Activated CD4-positive, alpha-beta memory T cell treated with anti-CD3 and anti-CD28 coated beads for 36 hours (primary cell): ENCODE measurements at regions of chr2 and their contacts with region 1.

Region 1: DNA sequence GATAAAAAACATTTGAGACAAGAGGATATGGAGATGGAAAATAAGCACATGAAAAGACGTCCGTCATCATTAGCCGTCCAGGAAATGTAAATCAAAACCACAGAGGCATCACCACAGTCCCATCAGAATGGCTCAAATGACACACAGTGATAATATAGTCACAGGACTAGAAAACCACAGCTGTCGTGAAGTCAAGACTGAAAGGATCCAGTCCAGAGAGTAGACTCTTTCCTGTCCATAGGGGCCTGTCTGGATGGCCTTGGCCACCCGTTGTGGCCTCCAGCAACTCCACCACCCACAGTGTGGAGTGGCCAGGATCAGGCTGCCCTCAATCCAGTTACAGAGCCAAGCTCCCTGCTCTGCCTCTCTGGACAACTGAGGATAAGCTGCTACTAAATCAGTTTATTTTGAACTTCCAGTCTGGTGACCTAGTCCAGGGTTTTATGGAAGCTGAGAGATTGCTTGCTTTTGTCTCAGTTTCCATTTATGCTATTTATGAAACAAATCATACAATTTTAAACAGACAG is 60.4 kb downstream of the RHOB start:
- DNase-seq: peak; percentile 61
- H3K4me3 Mint-ChIP-seq: no peak overlapping the region
- H3K27ac Mint-ChIP-seq: no peak overlapping the region
- H3K4me1 Mint-ChIP-seq: peaks cover 10% of the 10 kb centered on the region
- H3K27me3 Mint-ChIP-seq: peaks cover 3% of the 10 kb centered on the region

Region 2: GRCh38 chr2:19695706-19696105 is 811.5 kb before region 1 on chr2:
- CTCF ChIA-PET with region 1: no interaction called
- POLR2A ChIA-PET with region 1: no interaction called
- intact Hi-C with region 1: no loop called
- DNase-seq: no peak
- H3K4me3 Mint-ChIP-seq: no peak overlapping the region
- H3K27ac Mint-ChIP-seq: no peak overlapping the region
- H3K4me1 Mint-ChIP-seq: no peaks in the 10 kb centered on the region
- H3K27me3 Mint-ChIP-seq: no peaks in the 10 kb centered on the region

Region 3: DNA sequence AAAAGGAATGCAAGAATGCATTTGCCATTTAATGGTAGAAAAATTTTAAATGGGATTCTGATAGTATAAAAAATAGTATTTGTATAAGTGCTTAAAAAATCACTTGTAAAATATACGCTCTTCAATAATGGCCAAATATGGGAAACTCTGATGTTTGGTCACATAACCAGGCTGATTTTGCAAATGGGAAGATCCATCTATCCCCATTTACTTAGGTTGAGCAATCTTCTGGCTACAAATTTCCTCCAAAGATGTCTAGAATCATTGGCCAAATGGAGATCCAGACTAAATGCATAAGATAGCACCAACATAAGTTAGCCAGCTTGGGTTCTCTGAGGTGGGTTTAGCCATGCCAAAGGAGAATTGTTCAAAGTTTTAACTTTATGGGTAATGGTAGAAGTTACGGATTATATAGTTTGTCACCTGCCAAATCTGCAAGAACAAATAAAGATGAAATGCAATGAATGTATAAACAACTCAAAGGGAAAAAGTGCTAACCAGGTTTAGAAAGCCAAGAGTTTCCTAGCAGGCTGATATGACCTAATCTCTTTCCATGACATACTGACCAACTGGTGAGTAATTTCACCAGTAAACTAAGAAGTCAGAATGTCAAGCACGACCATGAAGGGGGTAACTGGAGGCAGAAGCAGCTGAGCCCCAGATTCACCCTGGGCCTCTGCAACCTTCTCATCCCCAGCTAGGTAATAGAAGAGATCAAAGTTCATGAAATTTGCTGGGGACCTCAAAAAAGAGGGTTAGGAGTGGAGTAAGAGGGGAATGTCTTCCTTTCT is 50.4 kb before region 1 on chr2:
- CTCF ChIA-PET with region 1: no interaction called
- POLR2A ChIA-PET with region 1: no interaction called
- intact Hi-C with region 1: loop called (anchors 1 kb)
- DNase-seq: peak; percentile 39
- H3K4me3 Mint-ChIP-seq: no peak overlapping the region
- H3K27ac Mint-ChIP-seq: peak overlapping the region; percentile 24
- H3K4me1 Mint-ChIP-seq: peaks cover 11% of the 10 kb centered on the region
- H3K27me3 Mint-ChIP-seq: peaks cover 25% of the 10 kb centered on the region

Region 4: GRCh38 chr2:20576598-20577115 is 69.4 kb after region 1 on chr2:
- CTCF ChIA-PET with region 1: no interaction called
- POLR2A ChIA-PET with region 1: no interaction called
- intact Hi-C with region 1: loop called (anchors 1 kb)
- DNase-seq: peak; percentile 55
- H3K4me3 Mint-ChIP-seq: peak overlapping the region; percentile 11
- H3K27ac Mint-ChIP-seq: peak overlapping the region; percentile 86
- H3K4me1 Mint-ChIP-seq: peaks cover 32% of the 10 kb centered on the region
- H3K27me3 Mint-ChIP-seq: no peaks in the 10 kb centered on the region